ENCODE measurements at regions of chr13 and their contacts with region 1.

Region 1: DNA sequence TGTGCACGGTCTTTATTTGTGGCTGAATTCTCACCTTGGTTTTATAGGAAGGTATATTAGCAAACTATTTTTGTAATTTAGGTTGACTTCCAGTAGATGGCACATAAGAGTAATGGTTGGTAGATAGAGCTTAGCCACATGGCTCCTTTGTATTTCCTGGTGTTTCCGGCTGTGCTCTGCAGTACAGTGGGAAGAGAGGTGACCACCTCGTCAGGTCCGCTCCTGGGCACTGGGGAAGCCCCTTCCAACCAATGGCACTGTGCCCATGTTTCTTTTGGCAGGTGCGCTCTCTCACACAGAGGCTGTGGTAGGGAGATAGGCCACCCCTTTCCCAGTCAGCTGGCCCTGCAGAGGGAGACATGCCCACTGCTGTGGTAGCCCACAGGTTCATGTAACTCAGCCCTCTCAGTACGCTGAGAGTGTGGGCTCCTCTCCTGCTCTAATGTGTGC is 74.3 kb upstream of the ATP12A start:
- DNase-seq: peak in 4 of 35 experiments; percentile 8 to 30 (median 16)
- ATAC-seq: peak; percentile 52 to 85 (median 60)
- H3K4me3 ChIP-seq: no peak overlapping the region
- H3K4me3 Mint-ChIP-seq: no peak overlapping the region
- H3K27ac ChIP-seq: no peak overlapping the region
- H3K27ac Mint-ChIP-seq: peak overlapping the region in 1 of 2 donors; percentile 8
- H3K4me1 ChIP-seq: no peaks in the 10 kb centered on the region
- H3K4me1 Mint-ChIP-seq: peaks cover 0 to 9% (median 6%) of the 10 kb centered on the region in 3 donors
- H3K27me3 ChIP-seq: peaks cover 0 to 3% of the 10 kb centered on the region in 2 experiments
- H3K27me3 Mint-ChIP-seq: no peaks in the 10 kb centered on the region

Region 2: DNA sequence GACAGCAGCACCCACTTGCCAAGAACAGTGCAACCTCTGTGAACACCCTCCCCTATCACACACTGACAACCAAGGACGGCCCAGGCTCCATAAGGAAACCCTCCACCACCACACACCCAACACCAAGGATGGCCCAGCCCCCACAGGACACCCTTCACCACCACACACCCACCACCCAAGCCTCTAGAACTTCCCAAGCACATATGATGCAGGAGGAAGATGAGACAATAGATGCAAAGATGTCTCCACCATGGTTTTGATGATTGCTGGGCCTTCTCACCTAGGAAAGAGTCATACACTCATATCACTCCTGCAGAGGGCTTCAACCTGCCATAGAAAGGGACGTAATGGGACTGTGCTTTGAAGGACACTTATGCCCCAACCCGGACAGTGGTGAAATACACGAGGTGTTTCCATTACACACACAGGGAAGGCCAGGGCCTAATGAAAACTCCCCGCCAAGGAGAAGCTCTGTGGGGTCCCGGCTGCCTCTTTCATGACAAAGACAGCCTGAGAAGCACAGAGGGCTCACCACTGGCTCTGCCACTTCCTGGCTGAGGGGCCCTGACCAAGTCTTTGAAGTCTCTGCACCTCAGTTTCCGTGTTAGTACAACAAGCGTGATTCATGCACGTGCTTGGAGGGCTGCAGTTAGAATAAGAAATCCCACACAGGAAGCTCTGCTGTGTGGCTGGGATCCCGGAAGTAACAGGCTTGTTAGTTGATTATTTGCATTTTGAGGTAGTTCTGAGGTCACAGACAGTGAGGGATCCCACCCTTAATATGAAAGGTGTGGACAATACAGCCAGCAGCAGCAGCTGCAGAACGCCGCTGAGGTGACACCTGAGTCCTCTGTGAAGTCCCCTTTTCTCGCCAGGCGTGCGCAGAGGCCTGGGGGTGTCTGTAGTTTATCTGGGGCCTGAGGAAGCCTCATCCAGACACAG is 12.3 kb after region 1 on chr13:
- CTCF ChIA-PET with region 1: interaction called, 3 to 10 read pairs
- POLR2A ChIA-PET with region 1: no interaction called
- DNase-seq: peak; percentile 38 to 85 (median 65)
- ATAC-seq: peak; percentile 78 to 89 (median 87)
- H3K4me3 ChIP-seq: no peak overlapping the region
- H3K4me3 Mint-ChIP-seq: peak overlapping the region in 1 of 3 donors; percentile 39
- H3K27ac ChIP-seq: peak overlapping the region; percentile 92
- H3K27ac Mint-ChIP-seq: peak overlapping the region; percentile 81 to 94
- H3K4me1 ChIP-seq: peaks cover 15 to 56% of the 10 kb centered on the region in 2 experiments
- H3K4me1 Mint-ChIP-seq: peaks cover 33 to 40% (median 39%) of the 10 kb centered on the region in 3 donors
- H3K27me3 ChIP-seq: no peaks in the 10 kb centered on the region
- H3K27me3 Mint-ChIP-seq: no peaks in the 10 kb centered on the region

Region 3: DNA sequence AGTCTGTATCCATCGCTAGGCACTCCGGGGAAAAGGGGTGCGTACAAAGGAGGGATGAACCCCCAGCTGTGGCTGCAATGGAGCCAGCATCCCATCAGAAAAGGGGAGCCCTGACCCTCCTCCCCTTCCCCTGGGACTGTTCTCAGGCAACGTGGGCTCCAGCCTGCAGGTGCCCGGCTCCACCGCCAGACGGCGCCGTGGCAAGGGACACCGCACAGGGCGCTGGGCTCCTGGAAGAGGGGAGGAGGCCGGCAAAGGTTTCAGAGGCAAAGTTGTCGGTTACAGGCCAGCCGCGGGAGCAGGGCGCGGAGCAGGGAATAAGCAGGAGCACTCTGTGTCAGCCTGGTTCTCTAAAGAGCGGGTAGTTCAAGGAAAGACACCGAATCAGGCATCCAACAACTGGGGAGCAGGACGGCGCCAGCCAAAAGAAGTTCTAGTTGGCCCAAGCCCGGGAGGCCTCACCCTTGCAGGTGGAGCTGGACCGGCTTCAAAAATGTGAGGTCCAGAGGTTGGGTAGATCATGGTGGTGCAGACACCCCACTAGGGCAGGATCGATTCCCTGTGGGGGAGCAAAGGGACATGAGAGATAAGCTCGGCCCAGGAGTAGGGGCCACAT is 21.3 kb after region 1 on chr13:
- CTCF ChIA-PET with region 1: interaction called, 3 to 13 read pairs
- POLR2A ChIA-PET with region 1: no interaction called
- DNase-seq: no peak
- ATAC-seq: no peak
- H3K4me3 ChIP-seq: no peak overlapping the region
- H3K4me3 Mint-ChIP-seq: no peak overlapping the region
- H3K27ac ChIP-seq: no peak overlapping the region
- H3K27ac Mint-ChIP-seq: peak overlapping the region in 1 of 2 donors; percentile 22
- H3K4me1 ChIP-seq: peaks cover 20 to 55% of the 10 kb centered on the region in 2 experiments
- H3K4me1 Mint-ChIP-seq: peaks cover 19 to 39% (median 39%) of the 10 kb centered on the region in 3 donors
- H3K27me3 ChIP-seq: no peaks in the 10 kb centered on the region
- H3K27me3 Mint-ChIP-seq: no peaks in the 10 kb centered on the region

Region 4: GRCh38 chr13:24671386-24672107 is 65.6 kb after region 1 on chr13:
- CTCF ChIA-PET with region 1: interaction called, 3 to 15 read pairs
- POLR2A ChIA-PET with region 1: no interaction called
- DNase-seq: peak in 1 of 35 experiments; percentile 52
- ATAC-seq: peak in 2 of 4 experiments; percentile 43 to 52
- H3K4me3 ChIP-seq: no peak overlapping the region
- H3K4me3 Mint-ChIP-seq: peak overlapping the region in 1 of 3 donors; percentile 33
- H3K27ac ChIP-seq: no peak overlapping the region
- H3K27ac Mint-ChIP-seq: no peak overlapping the region
- H3K4me1 ChIP-seq: peaks cover 0 to 11% of the 10 kb centered on the region in 2 experiments
- H3K4me1 Mint-ChIP-seq: peaks cover 8 to 14% (median 9%) of the 10 kb centered on the region in 3 donors
- H3K27me3 ChIP-seq: peaks cover 0 to 28% of the 10 kb centered on the region in 2 experiments
- H3K27me3 Mint-ChIP-seq: peaks cover 8 to 19% of the 10 kb centered on the region in 2 donors

Region 5: GRCh38 chr13:24727731-24728601 is 122.0 kb after region 1 on chr13:
- CTCF ChIA-PET with region 1: interaction called, 6 to 31 read pairs
- POLR2A ChIA-PET with region 1: no interaction called
- DNase-seq: peak; percentile 28 to 90 (median 68)
- ATAC-seq: peak; percentile 95 to 99 (median 96)
- H3K4me3 ChIP-seq: no peak overlapping the region
- H3K4me3 Mint-ChIP-seq: no peak overlapping the region
- H3K27ac ChIP-seq: no peak overlapping the region
- H3K27ac Mint-ChIP-seq: no peak overlapping the region
- H3K4me1 ChIP-seq: peaks cover 2 to 4% of the 10 kb centered on the region in 2 experiments
- H3K4me1 Mint-ChIP-seq: peaks cover 0 to 5% (median 0%) of the 10 kb centered on the region in 3 donors
- H3K27me3 ChIP-seq: peaks cover 0 to 11% of the 10 kb centered on the region in 2 experiments
- H3K27me3 Mint-ChIP-seq: peaks cover 8 to 11% of the 10 kb centered on the region in 2 donors